ENCODE measurements at regions of chr13 and their contacts with region 1.

Region 1: GRCh38 chr13:34076943-34077703 is 259.2 kb downstream of the RFC3 start:
- DNase-seq: peak; percentile 48
- H3K4me3 ChIP-seq: no peak overlapping the region
- H3K27ac ChIP-seq: no peak overlapping the region
- H3K4me1 ChIP-seq: peaks cover 14% of the 10 kb centered on the region
- H3K27me3 ChIP-seq: no peaks in the 10 kb centered on the region
- CTCF ChIP-seq: peak; percentile 40 to 41
- POLR2A ChIP-seq: no peak

Region 2: GRCh38 chr13:33817901-33818706 is 259.0 kb before region 1 on chr13 and contains the start of gene RFC3:
- CTCF ChIA-PET with region 1: no interaction called
- POLR2A ChIA-PET with region 1: no interaction called
- dilution Hi-C with region 1: no loop called
- intact Hi-C with region 1: loop called (anchors 1 kb)
- DNase-seq: peak; percentile 94
- H3K4me3 ChIP-seq: peak within 1 kb of the TSS; percentile 65 to 99 (median 99)
- H3K27ac ChIP-seq: peak within 1 kb of the TSS; percentile 85
- H3K4me1 ChIP-seq: peaks cover 9% of the 10 kb centered on the region
- H3K27me3 ChIP-seq: no peaks in the 10 kb centered on the region
- CTCF ChIP-seq: no peak
- POLR2A ChIP-seq: peak; percentile 48
- total RNA-seq, gene RFC3: 17.9 and 19.5 TPM in 2 replicates

Region 3: GRCh38 chr13:33931397-33932311 is 145.5 kb before region 1 on chr13:
- CTCF ChIA-PET with region 1: interaction called, 31 read pairs
- POLR2A ChIA-PET with region 1: no interaction called
- dilution Hi-C with region 1: no loop called
- intact Hi-C with region 1: loop called (anchors 1 kb)
- DNase-seq: peak; percentile 39
- H3K4me3 ChIP-seq: no peak overlapping the region
- H3K27ac ChIP-seq: no peak overlapping the region
- H3K4me1 ChIP-seq: no peaks in the 10 kb centered on the region
- H3K27me3 ChIP-seq: no peaks in the 10 kb centered on the region
- CTCF ChIP-seq: peak in 1 of 2 donors; percentile 52
- POLR2A ChIP-seq: no peak

Region 4: GRCh38 chr13:33992853-33993336 is 84.2 kb before region 1 on chr13:
- CTCF ChIA-PET with region 1: no interaction called
- POLR2A ChIA-PET with region 1: no interaction called
- dilution Hi-C with region 1: no loop called
- intact Hi-C with region 1: no loop called
- DNase-seq: no peak
- H3K4me3 ChIP-seq: no peak overlapping the region
- H3K27ac ChIP-seq: no peak overlapping the region
- H3K4me1 ChIP-seq: no peaks in the 10 kb centered on the region
- H3K27me3 ChIP-seq: no peaks in the 10 kb centered on the region
- CTCF ChIP-seq: no peak
- POLR2A ChIP-seq: no peak

Region 5: DNA sequence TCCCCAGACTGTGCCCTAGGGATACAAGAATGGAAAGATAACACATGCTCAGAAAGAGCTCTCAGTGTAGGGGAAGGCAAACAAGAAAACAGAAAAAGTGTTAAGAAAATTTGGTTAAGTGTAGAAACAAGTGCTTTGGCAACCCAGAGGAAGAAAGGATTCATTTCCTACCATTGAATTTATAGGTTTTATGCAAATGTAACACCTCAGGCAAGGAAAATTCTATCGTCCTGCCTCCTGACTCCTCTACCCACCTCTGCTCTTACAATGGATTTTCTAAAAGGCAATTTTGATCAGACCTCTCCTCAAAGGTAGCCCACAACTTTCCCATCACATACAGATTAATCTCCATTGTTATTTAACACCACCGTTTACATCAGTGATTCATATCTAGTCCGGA is 39.5 kb after region 1 on chr13:
- CTCF ChIA-PET with region 1: no interaction called
- POLR2A ChIA-PET with region 1: no interaction called
- dilution Hi-C with region 1: no loop called
- intact Hi-C with region 1: no loop called
- DNase-seq: no peak
- H3K4me3 ChIP-seq: no peak overlapping the region
- H3K27ac ChIP-seq: no peak overlapping the region
- H3K4me1 ChIP-seq: no peaks in the 10 kb centered on the region
- H3K27me3 ChIP-seq: no peaks in the 10 kb centered on the region
- CTCF ChIP-seq: no peak
- POLR2A ChIP-seq: no peak

Region 6: GRCh38 chr13:35157143-35157755 is 1080.1 kb after region 1 on chr13:
- CTCF ChIA-PET with region 1: no interaction called
- POLR2A ChIA-PET with region 1: no interaction called
- dilution Hi-C with region 1: no loop called
- intact Hi-C with region 1: loop called (anchors 1 kb)
- DNase-seq: peak; percentile 75
- H3K4me3 ChIP-seq: no peak overlapping the region
- H3K27ac ChIP-seq: no peak overlapping the region
- H3K4me1 ChIP-seq: no peaks in the 10 kb centered on the region
- H3K27me3 ChIP-seq: no peaks in the 10 kb centered on the region
- CTCF ChIP-seq: peak; percentile 42 to 45
- POLR2A ChIP-seq: no peak

Measured in endothelial cell of umbilical vein (primary cell).